ENCODE measurements at regions of chr6 and their contacts with region 1.

Region 1: DNA sequence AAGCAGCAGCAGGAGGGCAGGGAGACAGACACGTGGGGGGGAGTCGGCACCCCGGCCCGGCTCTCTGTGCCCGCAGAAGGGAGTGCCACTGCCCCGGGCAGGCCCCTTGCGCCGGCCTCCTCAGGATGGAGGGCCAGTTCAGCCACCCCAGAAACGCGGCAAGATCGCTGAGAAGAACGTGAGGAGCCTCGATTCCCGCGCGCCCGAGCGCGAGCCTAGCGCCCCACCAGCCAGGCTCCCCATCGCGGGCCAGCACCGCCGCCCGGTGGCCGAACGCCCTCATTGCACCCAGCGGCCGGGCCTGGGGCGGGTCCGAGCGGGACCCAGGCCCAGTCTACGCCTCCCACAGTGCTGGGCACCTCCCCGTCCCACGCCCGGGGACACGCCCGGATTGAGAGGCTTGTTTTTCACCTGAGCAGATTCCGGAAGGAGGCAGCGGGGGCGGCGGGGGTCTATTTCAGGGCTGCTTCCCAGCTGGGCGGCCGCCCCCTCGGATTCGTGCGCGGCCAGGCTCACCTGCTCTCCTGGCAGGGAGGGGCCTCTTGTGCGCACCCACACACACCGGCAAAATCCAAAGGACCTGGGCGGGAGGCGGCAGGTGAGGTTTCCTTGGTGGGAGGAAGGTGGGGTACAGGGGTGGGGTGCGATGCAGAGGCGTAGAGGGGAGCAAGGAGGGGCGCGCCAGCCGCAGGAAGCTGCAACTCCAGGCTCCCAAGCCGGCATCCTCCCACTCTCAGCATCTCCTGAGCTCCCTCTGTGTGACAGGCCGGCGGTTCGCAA is 9.0 kb upstream of the GRM4 start:
- DNase-seq: peak; percentile 24 to 60
- H3K4me3 ChIP-seq: no peak overlapping the region
- H3K27ac ChIP-seq: no peak overlapping the region
- H3K4me1 ChIP-seq: no peaks in the 10 kb centered on the region
- H3K27me3 ChIP-seq: no peaks in the 10 kb centered on the region
- CTCF ChIP-seq: peak; percentile 89 to 98 (median 96)
- POLR2A ChIP-seq: peak in 1 of 2 donors; percentile 36

Region 2: GRCh38 chr6:33771146-33772081 is 383.4 kb before region 1 on chr6:
- intact Hi-C with region 1: loop called (anchors 10 kb)
- DNase-seq: peak; percentile 70 to 83
- H3K4me3 ChIP-seq: no peak overlapping the region
- H3K27ac ChIP-seq: peak overlapping the region; percentile 75 to 82
- H3K4me1 ChIP-seq: no peaks in the 10 kb centered on the region
- H3K27me3 ChIP-seq: no peaks in the 10 kb centered on the region
- CTCF ChIP-seq: peak; percentile 94 to 97 (median 96)
- POLR2A ChIP-seq: no peak

Measured in uterus (tissue), 4 donors.